HEK293T (cell line): ENCODE measurements at regions of chr6 and their contacts with region 1.

Region 1: DNA sequence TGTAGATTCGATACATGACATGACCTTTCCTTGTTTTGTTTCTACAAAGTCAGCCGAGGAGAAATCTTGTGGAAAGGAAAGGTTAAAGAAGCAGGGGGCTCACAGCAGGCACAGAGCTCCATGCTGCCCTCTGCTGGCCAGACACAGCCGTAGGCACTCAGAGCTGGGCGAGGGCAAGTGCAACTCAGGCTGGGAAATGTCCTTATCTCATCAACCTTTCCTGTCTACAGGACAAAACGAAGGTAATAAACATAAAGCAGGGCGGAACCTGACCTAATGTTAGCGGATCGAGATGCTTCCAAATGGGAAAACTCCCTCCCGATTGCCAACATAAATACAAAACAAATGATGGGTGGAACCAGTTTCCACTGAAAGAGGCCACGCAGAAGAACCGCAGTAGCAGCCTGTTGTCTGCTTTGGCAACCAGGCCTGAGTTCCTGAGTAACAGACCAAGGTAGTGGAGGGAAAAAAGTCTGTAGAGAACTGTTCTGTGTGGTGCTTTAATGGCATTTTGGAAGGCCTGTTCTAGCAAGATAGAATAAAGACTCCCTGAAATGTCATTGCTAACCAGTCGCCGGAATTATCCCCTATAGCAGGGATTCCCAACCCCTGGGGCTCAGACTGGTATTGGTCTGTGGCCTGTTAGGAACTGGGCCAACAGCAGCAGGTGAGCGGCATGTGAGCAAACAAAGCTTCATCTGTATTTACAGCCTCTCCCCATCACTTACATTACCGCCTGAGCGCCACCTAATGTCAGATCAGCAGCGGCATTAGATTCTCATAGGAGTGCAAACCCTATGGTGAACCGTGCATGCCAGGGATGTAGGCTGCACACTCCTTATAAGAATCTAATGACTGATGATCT is 85.2 kb downstream of the MBOAT1 start:
- DNase-seq: peak; percentile 78

Region 2: DNA sequence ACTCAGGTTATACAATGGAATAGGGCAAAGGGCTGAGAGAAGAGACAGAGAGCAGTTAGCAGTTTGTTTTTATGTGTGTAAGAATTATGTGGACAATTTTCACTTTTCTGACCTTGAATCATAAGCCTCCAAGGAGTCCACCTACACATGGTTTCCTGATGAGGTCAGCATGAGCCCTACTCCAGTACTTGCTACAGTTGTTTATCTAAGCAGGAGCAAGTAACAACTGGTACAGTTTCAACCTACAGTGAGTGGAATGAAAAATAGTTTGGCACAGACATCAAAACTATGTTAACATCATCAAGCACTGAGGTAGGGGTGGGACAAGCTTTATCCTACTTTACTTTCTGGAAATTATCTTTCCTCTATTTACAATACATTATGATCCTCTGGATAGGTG is 716.5 kb before region 1 on chr6:
- CTCF ChIA-PET with region 1: no interaction called
- POLR2A ChIA-PET with region 1: no interaction called
- DNase-seq: no peak

Region 3: DNA sequence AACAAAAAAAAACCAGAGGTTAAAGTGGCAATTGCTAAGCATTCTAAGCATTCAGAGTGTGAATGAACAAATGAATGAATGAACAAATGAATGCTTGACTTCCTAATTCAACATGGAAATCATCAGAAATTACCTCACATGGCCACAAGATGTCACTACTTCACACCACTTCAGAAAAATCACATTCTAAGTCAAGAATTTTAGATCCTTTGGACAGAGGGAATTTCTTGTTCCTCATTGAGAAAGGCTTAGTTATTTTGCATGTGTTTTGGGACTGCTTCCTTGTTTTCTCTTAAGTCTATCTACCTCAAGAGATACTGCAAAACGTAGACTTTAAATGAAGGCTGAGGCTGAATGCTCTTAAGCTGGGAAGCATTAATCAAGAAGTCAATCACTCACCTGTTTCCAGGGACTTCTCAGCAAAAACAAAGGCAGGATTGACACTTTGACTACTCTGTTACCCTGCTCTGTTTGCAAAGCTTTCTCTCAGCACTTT is 34.9 kb before region 1 on chr6:
- CTCF ChIA-PET with region 1: interaction called, 36 read pairs
- POLR2A ChIA-PET with region 1: no interaction called
- DNase-seq: peak; percentile 35

Region 4: DNA sequence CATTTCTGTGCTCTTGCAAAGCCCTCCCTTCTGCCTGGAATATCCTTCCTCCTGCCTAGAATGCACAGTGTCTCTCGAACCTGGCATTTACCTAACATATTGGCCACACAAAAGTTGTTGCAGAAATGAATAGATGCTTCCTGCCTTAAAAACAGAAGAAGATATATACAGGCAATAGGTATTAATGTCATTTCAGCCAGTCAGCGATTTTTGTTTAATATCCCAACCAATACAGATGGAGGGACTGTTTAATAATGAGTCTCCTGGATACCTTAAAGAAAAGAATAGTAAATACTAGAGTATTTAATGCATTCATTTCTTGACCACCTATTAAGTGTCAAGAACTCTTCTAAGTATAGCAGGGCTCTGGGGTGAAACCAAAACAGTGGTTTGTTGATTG is 14.9 kb after region 1 on chr6:
- CTCF ChIA-PET with region 1: interaction called, 12 read pairs
- POLR2A ChIA-PET with region 1: no interaction called
- DNase-seq: no peak